Activated CD4-positive, alpha-beta T cell treated with anti-CD3 and anti-CD28 coated beads, Interleukin-2, amount 10 ng/mL, durations not matched to agents 24 days and 14 days (primary cell): ENCODE measurements at regions of chr12 and their contacts with region 1.

Region 1: GRCh38 chr12:7933255-7933729 is 2.7 kb downstream of the SLC2A3 start:
- DNase-seq: peak; percentile 92
- H3K4me3 Mint-ChIP-seq: no peak overlapping the region
- H3K27ac Mint-ChIP-seq: no peak overlapping the region
- H3K4me1 Mint-ChIP-seq: peaks cover 28% of the 10 kb centered on the region
- H3K27me3 Mint-ChIP-seq: no peaks in the 10 kb centered on the region

Region 2: GRCh38 chr12:7859552-7859951 is 73.7 kb before region 1 on chr12:
- intact Hi-C with region 1: loop called (anchors 5 kb)
- DNase-seq: no peak
- H3K4me3 Mint-ChIP-seq: no peak overlapping the region
- H3K27ac Mint-ChIP-seq: no peak overlapping the region
- H3K4me1 Mint-ChIP-seq: peaks cover 10% of the 10 kb centered on the region
- H3K27me3 Mint-ChIP-seq: peaks cover 14% of the 10 kb centered on the region

Region 3: GRCh38 chr12:7951671-7952070 is 18.4 kb after region 1 on chr12:
- intact Hi-C with region 1: no loop called
- DNase-seq: no peak
- H3K4me3 Mint-ChIP-seq: no peak overlapping the region
- H3K27ac Mint-ChIP-seq: no peak overlapping the region
- H3K4me1 Mint-ChIP-seq: peaks cover 7% of the 10 kb centered on the region
- H3K27me3 Mint-ChIP-seq: no peaks in the 10 kb centered on the region

Region 4: GRCh38 chr12:7970475-7971252 is 37.4 kb after region 1 on chr12:
- intact Hi-C with region 1: loop called (anchors 1 kb)
- DNase-seq: peak; percentile 96
- H3K4me3 Mint-ChIP-seq: peak overlapping the region; percentile 88
- H3K27ac Mint-ChIP-seq: peak overlapping the region; percentile 100
- H3K4me1 Mint-ChIP-seq: peaks cover 33% of the 10 kb centered on the region
- H3K27me3 Mint-ChIP-seq: no peaks in the 10 kb centered on the region

Region 5: GRCh38 chr12:7995266-7995963 is 62.1 kb after region 1 on chr12:
- intact Hi-C with region 1: loop called (anchors 1 kb)
- DNase-seq: peak; percentile 94
- H3K4me3 Mint-ChIP-seq: no peak overlapping the region
- H3K27ac Mint-ChIP-seq: no peak overlapping the region
- H3K4me1 Mint-ChIP-seq: peaks cover 22% of the 10 kb centered on the region
- H3K27me3 Mint-ChIP-seq: no peaks in the 10 kb centered on the region

Region 6: DNA sequence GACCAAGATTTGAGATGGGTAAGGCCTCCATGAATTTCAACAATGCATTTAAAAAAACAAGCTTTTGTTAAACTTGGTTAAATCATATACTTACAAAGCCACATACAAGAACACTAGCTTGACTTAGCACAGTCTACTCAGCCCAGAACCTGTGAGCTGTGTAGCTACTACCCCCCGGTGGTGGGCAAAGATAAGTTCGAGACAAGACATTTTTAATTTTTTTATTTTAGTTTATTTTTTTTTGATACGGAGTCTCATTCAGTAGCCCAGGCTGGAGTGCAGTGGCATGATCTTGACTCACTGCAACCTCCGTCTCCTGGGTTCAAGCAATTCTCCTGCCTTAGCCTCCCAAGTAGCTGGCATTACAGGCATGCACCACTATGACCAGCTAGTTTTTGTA is 145.1 kb after region 1 on chr12:
- intact Hi-C with region 1: loop called (anchors 5 kb)
- DNase-seq: peak; percentile 84
- H3K4me3 Mint-ChIP-seq: no peak overlapping the region
- H3K27ac Mint-ChIP-seq: no peak overlapping the region
- H3K4me1 Mint-ChIP-seq: peaks cover 19% of the 10 kb centered on the region
- H3K27me3 Mint-ChIP-seq: no peaks in the 10 kb centered on the region